Heart right ventricle (tissue), 16 donors: ENCODE measurements at regions of chr1 and their contacts with region 1.

Region 1: DNA sequence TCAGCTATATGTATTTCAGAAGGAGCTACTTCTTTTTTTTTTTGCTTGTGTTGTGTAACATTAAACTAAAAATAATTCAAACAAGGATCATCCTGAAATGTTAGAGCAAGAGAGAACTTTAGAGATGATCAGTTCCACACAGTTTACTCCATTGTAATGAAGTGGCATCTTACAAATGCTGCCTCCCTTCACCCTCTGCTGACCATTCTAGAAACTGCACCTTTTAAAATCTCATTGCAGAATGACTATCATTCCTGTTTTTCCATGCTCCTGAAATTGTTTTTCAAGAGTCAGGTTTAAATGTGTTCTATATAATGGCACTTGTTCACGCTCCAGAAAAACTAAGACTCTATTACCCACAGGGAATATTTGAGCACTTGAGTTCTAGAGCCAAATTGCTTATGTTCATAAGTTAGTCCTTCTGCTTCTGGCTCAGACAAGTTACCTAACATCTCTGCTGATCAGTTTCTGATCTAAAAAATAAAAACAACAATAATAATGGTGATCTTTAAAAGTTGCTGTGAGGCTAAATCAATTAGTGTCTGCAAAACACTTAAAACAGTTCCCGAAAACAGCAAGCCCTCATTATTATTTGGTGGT is 21.5 kb upstream of the SLC44A5 start:
- DNase-seq: no peak
- ATAC-seq: peak in 1 of 8 donors; percentile 50
- H3K4me3 ChIP-seq: no peak overlapping the region
- H3K27ac ChIP-seq: no peak overlapping the region
- H3K4me1 ChIP-seq: no peaks in the 10 kb centered on the region
- H3K27me3 ChIP-seq: peaks cover 0 to 13% (median 5%) of the 10 kb centered on the region in 7 donors
- CTCF ChIP-seq: peak; percentile 28 to 79 (median 67)

Region 2: GRCh38 chr1:75233302-75233929 is 399.0 kb before region 1 on chr1:
- intact Hi-C with region 1: loop called in 1 of 10 experiments (anchors 10 kb)
- DNase-seq: no peak
- ATAC-seq: peak in 1 of 8 donors; percentile 45
- H3K4me3 ChIP-seq: no peak overlapping the region
- H3K27ac ChIP-seq: no peak overlapping the region
- H3K4me1 ChIP-seq: no peaks in the 10 kb centered on the region
- H3K27me3 ChIP-seq: no peaks in the 10 kb centered on the region
- CTCF ChIP-seq: peak in 8 of 9 donors; percentile 10 to 66 (median 57)

Region 3: GRCh38 chr1:75265792-75266191 is 366.7 kb before region 1 on chr1:
- intact Hi-C with region 1: loop called (anchors 2 to 10 kb)
- DNase-seq: no peak
- ATAC-seq: peak in 1 of 8 donors; percentile 27
- H3K4me3 ChIP-seq: no peak overlapping the region
- H3K27ac ChIP-seq: no peak overlapping the region
- H3K4me1 ChIP-seq: no peaks in the 10 kb centered on the region
- H3K27me3 ChIP-seq: no peaks in the 10 kb centered on the region
- CTCF ChIP-seq: peak in 8 of 9 donors; percentile 24 to 66 (median 56)

Region 4: GRCh38 chr1:75985827-75986226 is 353.4 kb after region 1 on chr1:
- intact Hi-C with region 1: no loop called
- DNase-seq: no peak
- ATAC-seq: no peak
- H3K4me3 ChIP-seq: no peak overlapping the region
- H3K27ac ChIP-seq: no peak overlapping the region
- H3K4me1 ChIP-seq: no peaks in the 10 kb centered on the region
- H3K27me3 ChIP-seq: peaks cover 0 to 23% (median 12%) of the 10 kb centered on the region in 7 donors
- CTCF ChIP-seq: no peak